GM18951 (cell line): ENCODE measurements at regions of chr20 and their contacts with region 1.

Region 1: GRCh38 chr20:25696384-25697131 is at the start of gene ZNF337:
- POLR2A ChIP-seq: peak; percentile 80

Region 2: DNA sequence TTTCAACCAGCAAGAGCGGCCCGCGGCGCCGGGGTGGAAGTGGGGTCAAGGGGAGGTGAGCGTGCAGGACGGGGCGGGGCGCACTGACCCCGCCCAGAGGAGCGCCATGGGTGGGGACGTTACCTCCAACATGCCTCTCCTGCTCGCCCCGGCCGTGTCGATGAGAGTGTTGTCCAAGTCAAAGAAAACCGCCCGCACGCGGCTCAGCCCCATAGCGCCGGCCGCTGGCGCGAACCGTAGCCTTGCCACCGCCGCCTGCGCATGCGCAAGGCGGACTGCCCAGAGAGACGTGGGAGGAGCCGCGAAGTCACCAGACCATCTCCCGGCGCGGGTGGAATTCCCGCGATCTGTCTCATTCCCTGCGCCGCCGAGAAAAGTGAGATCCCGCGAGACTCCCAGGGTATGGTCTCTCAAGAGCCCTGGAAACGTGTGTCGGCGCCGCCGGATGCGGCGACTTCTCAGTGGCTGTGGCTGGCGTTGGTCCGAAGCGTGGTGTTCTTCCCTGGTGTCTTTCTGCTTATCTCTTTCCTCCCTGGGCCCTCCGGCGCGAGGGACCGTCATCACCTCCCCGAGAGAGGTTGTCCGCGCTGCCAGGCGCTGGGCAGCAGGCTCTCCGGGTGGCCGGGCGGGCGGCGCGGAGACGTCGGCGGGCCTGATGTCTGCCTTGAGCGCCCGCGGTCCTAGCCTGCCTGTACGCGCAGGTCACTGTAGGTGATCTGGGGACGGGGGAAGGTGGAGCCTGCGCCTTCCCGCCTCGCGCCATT is 72.6 kb before region 1 on chr20 and contains the start of gene NANP:
- in situ Hi-C with region 1: no loop called
- POLR2A ChIP-seq: peak; percentile 94

Region 3: GRCh38 chr20:25859649-25860530 is 163.3 kb after region 1 on chr20:
- in situ Hi-C with region 1: loop called (anchors 10 kb)
- POLR2A ChIP-seq: no peak

Region 4: GRCh38 chr20:26163890-26164289 is 467.3 kb after region 1 on chr20:
- in situ Hi-C with region 1: no loop called
- POLR2A ChIP-seq: no peak